Lower leg skin (tissue), 4 donors: ENCODE measurements at regions of chr7 and their contacts with region 1.

Region 1: DNA sequence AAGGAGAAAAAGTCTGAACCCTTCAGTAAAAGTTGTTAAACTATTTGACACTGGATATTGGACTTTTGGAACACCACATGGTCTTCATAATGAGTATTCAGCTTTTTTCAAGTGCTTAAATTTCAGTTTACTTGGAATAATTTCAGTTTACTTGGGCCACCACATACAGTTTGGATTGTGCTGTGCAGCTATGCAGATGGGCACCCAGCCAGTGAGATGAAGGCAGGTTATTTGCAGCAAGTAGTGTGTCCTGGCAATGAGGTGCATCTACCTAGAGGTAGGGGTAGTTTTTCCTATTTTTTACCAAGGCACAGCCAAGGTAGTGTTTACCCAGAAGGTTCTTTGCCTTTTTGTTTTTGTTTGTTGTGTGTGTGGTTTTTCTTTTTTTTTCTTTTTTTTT is 23.9 kb upstream of the ADAM22 start:
- DNase-seq: no peak
- H3K4me3 ChIP-seq: no peak overlapping the region
- CTCF ChIP-seq: no peak
- POLR2A ChIP-seq: no peak

Region 2: GRCh38 chr7:87729327-87729726 is 180.8 kb before region 1 on chr7:
- intact Hi-C with region 1: no loop called
- DNase-seq: no peak
- H3K4me3 ChIP-seq: no peak overlapping the region
- CTCF ChIP-seq: no peak
- POLR2A ChIP-seq: no peak

Region 3: GRCh38 chr7:87853237-87853864 is 56.8 kb before region 1 on chr7:
- intact Hi-C with region 1: loop called (anchors 5 kb)
- DNase-seq: no peak
- H3K4me3 ChIP-seq: no peak overlapping the region
- CTCF ChIP-seq: no peak
- POLR2A ChIP-seq: no peak